Activated CD4-positive, alpha-beta memory T cell treated with anti-CD3 and anti-CD28 coated beads for 36 hours (primary cell): ENCODE measurements at regions of chr3 and their contacts with region 1.

Region 1: GRCh38 chr3:108835101-108835500 is 12.5 kb downstream of the TRAT1 start:
- DNase-seq: peak; percentile 49
- H3K4me3 Mint-ChIP-seq: peak overlapping the region; percentile 77
- H3K27ac Mint-ChIP-seq: peak overlapping the region; percentile 93
- H3K4me1 Mint-ChIP-seq: peaks cover 79% of the 10 kb centered on the region
- H3K27me3 Mint-ChIP-seq: no peaks in the 10 kb centered on the region

Region 2: GRCh38 chr3:108130701-108131474 is 704.2 kb before region 1 on chr3:
- CTCF ChIA-PET with region 1: no interaction called
- POLR2A ChIA-PET with region 1: no interaction called
- intact Hi-C with region 1: loop called (anchors 5 kb)
- DNase-seq: no peak
- H3K4me3 Mint-ChIP-seq: peak overlapping the region; percentile 33
- H3K27ac Mint-ChIP-seq: peak overlapping the region; percentile 85
- H3K4me1 Mint-ChIP-seq: peaks cover 88% of the 10 kb centered on the region
- H3K27me3 Mint-ChIP-seq: no peaks in the 10 kb centered on the region

Region 3: GRCh38 chr3:108818404-108818803 is 16.7 kb before region 1 on chr3:
- CTCF ChIA-PET with region 1: interaction called, 106 read pairs
- POLR2A ChIA-PET with region 1: interaction called, 18 read pairs
- intact Hi-C with region 1: loop called (anchors 1 kb)
- DNase-seq: peak; percentile 77
- H3K4me3 Mint-ChIP-seq: peak overlapping the region; percentile 35
- H3K27ac Mint-ChIP-seq: peak overlapping the region; percentile 59
- H3K4me1 Mint-ChIP-seq: peaks cover 29% of the 10 kb centered on the region
- H3K27me3 Mint-ChIP-seq: no peaks in the 10 kb centered on the region

Region 4: GRCh38 chr3:108883373-108883772 is 48.3 kb after region 1 on chr3:
- CTCF ChIA-PET with region 1: no interaction called
- POLR2A ChIA-PET with region 1: no interaction called
- intact Hi-C with region 1: loop called (anchors 1 kb)
- DNase-seq: no peak
- H3K4me3 Mint-ChIP-seq: no peak overlapping the region
- H3K27ac Mint-ChIP-seq: no peak overlapping the region
- H3K4me1 Mint-ChIP-seq: peaks cover 6% of the 10 kb centered on the region
- H3K27me3 Mint-ChIP-seq: no peaks in the 10 kb centered on the region

Region 5: GRCh38 chr3:108998436-108998835 is 163.3 kb after region 1 on chr3:
- CTCF ChIA-PET with region 1: no interaction called
- POLR2A ChIA-PET with region 1: no interaction called
- intact Hi-C with region 1: no loop called
- DNase-seq: no peak
- H3K4me3 Mint-ChIP-seq: no peak overlapping the region
- H3K27ac Mint-ChIP-seq: no peak overlapping the region
- H3K4me1 Mint-ChIP-seq: no peaks in the 10 kb centered on the region
- H3K27me3 Mint-ChIP-seq: peaks cover 12% of the 10 kb centered on the region

Region 6: DNA sequence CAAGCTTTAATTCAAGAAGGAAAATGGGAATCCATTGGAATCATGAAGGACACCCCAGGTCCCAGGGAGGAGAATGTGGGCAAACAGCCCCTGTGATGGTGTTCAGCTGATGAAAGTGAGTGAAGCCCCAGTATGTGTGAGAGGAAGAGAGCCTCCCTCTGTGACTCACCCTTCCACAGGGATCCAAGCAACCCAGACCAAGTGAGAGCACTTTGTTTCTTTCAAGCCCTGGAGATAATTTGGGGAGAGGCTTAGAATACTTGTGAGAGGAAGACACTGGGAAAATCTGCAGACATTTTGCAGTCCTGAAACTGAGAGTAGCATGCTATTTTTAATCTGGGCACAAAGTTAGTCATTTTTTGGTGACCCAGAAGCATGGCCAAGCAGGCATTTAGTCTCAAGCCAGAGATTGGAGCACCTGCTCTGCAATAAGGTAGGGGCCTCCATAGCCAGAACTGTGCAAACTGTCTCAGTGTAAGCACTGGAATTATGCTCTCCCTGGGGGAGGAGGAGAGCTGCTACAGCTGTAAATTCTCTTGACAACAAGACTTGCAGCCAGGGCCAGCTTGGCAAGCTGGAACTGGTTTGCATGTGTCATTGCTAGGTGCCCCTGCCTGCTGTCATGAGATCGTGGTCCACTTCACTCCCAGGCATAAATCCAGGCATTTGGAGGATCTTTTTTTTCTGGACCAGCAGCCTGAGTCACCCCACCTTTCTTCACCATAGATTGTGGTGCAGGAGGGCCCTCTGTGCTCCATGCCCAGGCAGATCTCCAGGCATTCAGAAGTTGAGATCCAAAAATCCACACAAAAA is 1040.0 kb after region 1 on chr3:
- CTCF ChIA-PET with region 1: no interaction called
- POLR2A ChIA-PET with region 1: no interaction called
- intact Hi-C with region 1: no loop called
- DNase-seq: no peak
- H3K4me3 Mint-ChIP-seq: no peak overlapping the region
- H3K27ac Mint-ChIP-seq: no peak overlapping the region
- H3K4me1 Mint-ChIP-seq: no peaks in the 10 kb centered on the region
- H3K27me3 Mint-ChIP-seq: no peaks in the 10 kb centered on the region